Activated CD4-positive, alpha-beta T cell treated with anti-CD3 and anti-CD28 coated beads for 36 hours (primary cell): ENCODE measurements at regions of chr2 and their contacts with region 1.

Region 1: GRCh38 chr2:39728941-39729351 is 50.1 kb downstream of the THUMPD2 start:
- DNase-seq: peak; percentile 71
- ATAC-seq: peak; percentile 63
- H3K4me3 Mint-ChIP-seq: no peak overlapping the region
- H3K27ac Mint-ChIP-seq: no peak overlapping the region
- H3K4me1 Mint-ChIP-seq: peaks cover 11% of the 10 kb centered on the region
- H3K27me3 Mint-ChIP-seq: peaks cover 11% of the 10 kb centered on the region

Region 2: GRCh38 chr2:39530411-39530866 is 198.5 kb before region 1 on chr2:
- CTCF ChIA-PET with region 1: interaction called, 4 read pairs
- POLR2A ChIA-PET with region 1: no interaction called
- intact Hi-C with region 1: loop called in 1 of 2 experiments (anchors 10 kb)
- DNase-seq: no peak
- ATAC-seq: no peak
- H3K4me3 Mint-ChIP-seq: no peak overlapping the region
- H3K27ac Mint-ChIP-seq: no peak overlapping the region
- H3K4me1 Mint-ChIP-seq: no peaks in the 10 kb centered on the region
- H3K27me3 Mint-ChIP-seq: peaks cover 3% of the 10 kb centered on the region